Activated CD8-positive, alpha-beta T cell treated with anti-CD3 and anti-CD28 coated beads for 36 hours (primary cell): ENCODE measurements at regions of chr1 and their contacts with region 1.

Region 1: DNA sequence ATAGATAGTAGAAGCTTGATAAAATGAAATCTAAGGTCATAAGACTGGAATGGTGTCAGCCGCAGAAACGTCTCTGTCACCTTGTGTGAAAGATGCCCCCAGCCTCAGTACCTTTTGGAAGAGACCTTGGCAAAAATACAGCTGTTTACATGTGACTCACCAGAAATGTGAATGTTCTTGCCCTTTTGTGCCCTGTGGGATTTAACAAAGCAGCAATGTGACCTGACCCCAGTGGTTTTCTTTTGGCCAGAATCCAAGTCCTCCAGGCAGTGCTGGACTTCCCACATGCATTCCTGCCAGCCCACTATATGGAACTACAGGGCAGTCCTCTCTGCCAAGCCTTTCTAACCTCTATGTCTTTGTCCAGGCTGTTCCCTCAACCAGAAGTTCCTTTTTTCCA is 27.2 kb upstream of the LRRC8C start:
- DNase-seq: no peak
- ATAC-seq: no peak
- H3K4me3 Mint-ChIP-seq: peak overlapping the region; percentile 20
- H3K27ac Mint-ChIP-seq: peak overlapping the region; percentile 99
- H3K4me1 Mint-ChIP-seq: peaks cover 97% of the 10 kb centered on the region
- H3K27me3 Mint-ChIP-seq: no peaks in the 10 kb centered on the region
- CTCF ChIP-seq: no peak

Region 2: DNA sequence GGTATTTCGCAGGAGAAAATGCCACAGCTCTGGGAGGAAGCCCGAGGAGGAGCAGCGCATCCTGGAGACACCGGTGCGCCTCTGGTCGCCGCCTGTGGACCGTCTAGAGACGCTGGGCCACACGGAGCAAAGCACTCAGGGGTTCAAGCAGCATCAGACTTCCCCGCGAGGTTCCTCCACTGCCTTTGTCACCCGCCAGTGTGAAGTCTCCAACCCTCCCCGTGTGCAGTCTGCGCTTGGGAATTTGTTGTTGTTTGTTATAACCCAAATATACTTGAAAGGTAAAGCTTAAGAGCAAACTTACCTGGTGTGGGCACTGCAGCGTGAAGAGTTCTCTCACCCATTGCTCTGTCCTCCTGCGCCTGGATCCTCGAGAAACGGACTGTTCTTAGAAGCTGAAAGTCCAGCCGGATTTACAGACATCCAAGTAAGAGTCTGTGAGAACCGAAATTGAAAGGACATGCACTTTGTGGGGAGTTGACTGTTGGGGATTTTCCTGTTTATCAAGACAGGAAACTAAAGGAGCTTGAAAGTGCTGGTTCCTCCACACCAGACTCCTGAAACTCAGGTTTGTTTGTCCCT is 407.1 kb before region 1 on chr1 and contains the start of gene GBP4:
- CTCF ChIA-PET with region 1: no interaction called
- POLR2A ChIA-PET with region 1: no interaction called
- intact Hi-C with region 1: no loop called
- DNase-seq: peak; percentile 61
- ATAC-seq: peak; percentile 58
- H3K4me3 Mint-ChIP-seq: peak within 1 kb of the TSS; percentile 92
- H3K27ac Mint-ChIP-seq: peak within 1 kb of the TSS; percentile 97
- H3K4me1 Mint-ChIP-seq: peaks cover 76% of the 10 kb centered on the region
- H3K27me3 Mint-ChIP-seq: no peaks in the 10 kb centered on the region
- CTCF ChIP-seq: no peak
- total RNA-seq, gene GBP4: 34.2 to 38.3 TPM

Region 3: DNA sequence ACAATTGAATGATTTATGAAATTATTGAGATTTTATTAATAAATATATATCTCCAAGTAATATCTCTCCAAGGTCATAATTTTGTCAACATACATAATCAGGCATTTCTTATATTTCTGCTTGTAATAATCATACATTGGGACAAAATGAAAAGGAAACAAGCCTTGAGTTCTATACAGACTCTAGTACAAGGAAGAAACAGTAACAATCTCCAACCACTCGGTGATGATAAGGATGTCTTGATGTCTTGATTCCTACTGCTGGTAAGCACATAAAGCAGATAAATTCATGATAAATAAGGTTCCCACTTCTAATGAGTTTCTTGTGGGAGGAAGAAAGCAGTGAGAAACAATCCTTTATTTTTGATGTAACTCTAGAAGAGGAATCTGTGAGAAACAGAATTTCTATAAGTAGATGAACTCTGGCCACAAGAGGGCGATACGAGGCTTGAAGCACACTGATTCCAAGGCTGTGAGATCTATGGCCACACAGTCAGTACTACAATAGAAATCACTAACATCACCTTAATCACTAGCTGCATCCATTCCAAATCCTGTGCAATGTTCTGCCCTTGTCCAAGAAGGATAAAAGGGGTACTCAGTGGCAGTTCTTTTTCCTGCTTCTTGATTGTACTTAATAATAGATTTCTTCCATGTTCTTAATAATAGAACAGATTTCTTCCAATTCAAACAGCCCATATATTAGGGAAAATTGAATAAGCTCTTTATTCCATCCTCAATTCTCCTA is 122.5 kb before region 1 on chr1:
- CTCF ChIA-PET with region 1: interaction called, 58 read pairs
- POLR2A ChIA-PET with region 1: interaction called, 3 read pairs
- intact Hi-C with region 1: loop called (anchors 5 kb)
- DNase-seq: peak; percentile 94
- ATAC-seq: peak; percentile 87
- H3K4me3 Mint-ChIP-seq: no peak overlapping the region
- H3K27ac Mint-ChIP-seq: no peak overlapping the region
- H3K4me1 Mint-ChIP-seq: peaks cover 21% of the 10 kb centered on the region
- H3K27me3 Mint-ChIP-seq: peaks cover 3% of the 10 kb centered on the region
- CTCF ChIP-seq: peak; percentile 85

Region 4: GRCh38 chr1:89615676-89616598 is 10.2 kb after region 1 on chr1:
- CTCF ChIA-PET with region 1: interaction called, 19 read pairs
- POLR2A ChIA-PET with region 1: interaction called, 11 read pairs
- intact Hi-C with region 1: no loop called
- DNase-seq: peak; percentile 48
- ATAC-seq: no peak
- H3K4me3 Mint-ChIP-seq: no peak overlapping the region
- H3K27ac Mint-ChIP-seq: no peak overlapping the region
- H3K4me1 Mint-ChIP-seq: peaks cover 70% of the 10 kb centered on the region
- H3K27me3 Mint-ChIP-seq: no peaks in the 10 kb centered on the region
- CTCF ChIP-seq: peak; percentile 54

Region 5: DNA sequence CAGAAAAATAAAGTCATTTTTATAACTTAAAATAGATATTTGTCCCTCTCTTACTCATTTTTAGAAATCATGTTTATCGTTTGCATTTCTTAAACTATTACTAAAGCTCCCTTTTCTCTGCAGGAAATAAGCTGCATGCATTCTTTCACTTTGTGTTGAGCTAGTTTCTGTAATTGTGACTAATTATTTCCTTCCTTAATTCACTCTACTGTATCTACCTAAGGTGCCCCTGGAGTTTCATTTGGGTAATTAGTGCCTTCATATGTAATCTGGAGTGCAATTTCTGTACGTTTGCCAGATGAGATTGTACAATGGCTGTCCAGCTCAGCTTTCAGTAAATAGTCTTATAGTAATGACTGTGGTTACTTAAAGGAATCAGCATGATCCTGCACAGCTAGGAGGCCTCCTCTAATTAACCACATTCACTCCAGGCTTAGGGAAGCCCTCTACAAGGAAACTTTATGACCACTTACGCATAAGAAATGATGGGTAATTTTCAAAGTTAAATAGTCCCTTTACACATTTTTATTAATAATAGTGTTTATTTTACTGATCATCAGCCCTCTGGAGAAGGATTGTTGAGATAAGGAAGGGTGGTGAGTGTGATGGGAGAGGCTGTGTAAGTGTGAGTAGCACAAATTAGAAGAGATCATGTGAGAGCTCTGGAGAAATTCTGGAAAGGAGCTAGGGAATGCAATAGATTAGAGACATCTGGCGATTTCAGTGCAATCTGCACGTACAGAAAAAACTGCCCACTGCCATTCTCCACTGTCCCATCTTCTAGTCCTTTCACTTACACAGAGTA is 114.0 kb after region 1 on chr1:
- CTCF ChIA-PET with region 1: interaction called, 12 read pairs
- POLR2A ChIA-PET with region 1: interaction called, 11 read pairs
- intact Hi-C with region 1: loop called (anchors 5 kb)
- DNase-seq: peak; percentile 33
- ATAC-seq: peak; percentile 80
- H3K4me3 Mint-ChIP-seq: peak overlapping the region; percentile 53
- H3K27ac Mint-ChIP-seq: peak overlapping the region; percentile 98
- H3K4me1 Mint-ChIP-seq: peaks cover 90% of the 10 kb centered on the region
- H3K27me3 Mint-ChIP-seq: no peaks in the 10 kb centered on the region
- CTCF ChIP-seq: peak; percentile 50

Region 6: GRCh38 chr1:89780721-89781120 is 175.0 kb after region 1 on chr1:
- CTCF ChIA-PET with region 1: interaction called, 5 read pairs
- POLR2A ChIA-PET with region 1: interaction called, 24 read pairs
- intact Hi-C with region 1: no loop called
- DNase-seq: peak; percentile 62
- ATAC-seq: peak; percentile 68
- H3K4me3 Mint-ChIP-seq: peak overlapping the region; percentile 36
- H3K27ac Mint-ChIP-seq: peak overlapping the region; percentile 93
- H3K4me1 Mint-ChIP-seq: peaks cover 48% of the 10 kb centered on the region
- H3K27me3 Mint-ChIP-seq: no peaks in the 10 kb centered on the region
- CTCF ChIP-seq: peak; percentile 56